WTC11 (cell line): ENCODE measurements at regions of chr9 and their contacts with region 1.

Region 1: DNA sequence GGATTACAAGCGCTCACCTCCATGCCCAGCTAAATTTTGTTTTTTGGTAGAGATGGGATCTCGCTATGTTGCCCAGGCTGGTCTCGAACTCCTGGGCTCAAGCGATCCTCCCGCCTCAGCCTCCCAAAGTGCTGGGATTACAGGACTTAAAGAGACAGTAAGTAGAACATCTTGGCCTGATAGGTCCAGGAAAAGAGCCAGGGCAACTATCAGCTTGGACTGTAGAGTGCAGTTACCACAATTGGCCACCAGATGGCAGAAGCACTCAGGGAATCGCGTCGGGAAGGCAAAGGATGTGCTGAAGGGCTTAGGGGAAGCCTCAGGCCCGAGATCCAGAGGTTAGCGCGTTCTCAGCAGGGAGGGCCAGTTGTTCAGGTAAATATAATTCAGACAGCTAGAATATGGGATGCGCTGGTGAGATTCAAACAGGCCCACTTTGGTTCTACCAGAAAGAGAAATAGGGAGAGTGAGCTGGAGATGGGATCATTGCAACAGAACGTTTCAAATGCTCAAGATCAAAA is 21.5 kb downstream of the C9orf57 start:
- DNase-seq: peak; percentile 86
- ATAC-seq: peak; percentile 96
- H3K4me3 Mint-ChIP-seq: no peak overlapping the region
- H3K27ac Mint-ChIP-seq: no peak overlapping the region
- H3K4me1 Mint-ChIP-seq: peaks cover 3% of the 10 kb centered on the region; the same call in 1 of the 2 replicates
- H3K27me3 Mint-ChIP-seq: no peaks in the 10 kb centered on the region
- CTCF ChIP-seq: peak; percentile 99

Region 2: DNA sequence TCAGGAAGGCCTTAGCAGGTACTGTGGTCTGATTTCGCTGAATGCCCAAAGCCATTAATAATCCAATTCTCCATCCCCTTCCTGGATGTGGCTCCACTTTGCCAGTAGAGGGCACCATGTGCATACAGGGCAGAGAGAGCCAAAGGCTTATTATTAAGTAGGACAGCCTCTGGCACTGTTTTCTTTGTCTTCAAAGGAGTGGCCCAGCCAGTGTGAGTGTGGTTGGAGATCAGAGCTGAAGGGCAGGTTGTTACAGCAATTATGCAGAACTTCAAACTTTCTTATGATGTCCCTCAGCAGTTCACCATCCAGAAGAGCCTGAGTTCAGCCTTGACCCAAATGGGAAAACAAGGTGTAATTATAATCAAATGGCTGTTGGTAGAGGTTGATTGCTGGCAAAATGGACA is 232.0 kb before region 1 on chr9:
- CTCF ChIA-PET with region 1: interaction called, 22 read pairs
- POLR2A ChIA-PET with region 1: no interaction called
- DNase-seq: peak; percentile 57
- ATAC-seq: peak; percentile 100
- H3K4me3 Mint-ChIP-seq: no peak overlapping the region
- H3K27ac Mint-ChIP-seq: peak overlapping the region; percentile 58
- H3K4me1 Mint-ChIP-seq: peaks cover 17% of the 10 kb centered on the region
- H3K27me3 Mint-ChIP-seq: no peaks in the 10 kb centered on the region
- CTCF ChIP-seq: 0 out of 2 replicates have a peak, but pooled peaks have one; percentile 43

Region 3: DNA sequence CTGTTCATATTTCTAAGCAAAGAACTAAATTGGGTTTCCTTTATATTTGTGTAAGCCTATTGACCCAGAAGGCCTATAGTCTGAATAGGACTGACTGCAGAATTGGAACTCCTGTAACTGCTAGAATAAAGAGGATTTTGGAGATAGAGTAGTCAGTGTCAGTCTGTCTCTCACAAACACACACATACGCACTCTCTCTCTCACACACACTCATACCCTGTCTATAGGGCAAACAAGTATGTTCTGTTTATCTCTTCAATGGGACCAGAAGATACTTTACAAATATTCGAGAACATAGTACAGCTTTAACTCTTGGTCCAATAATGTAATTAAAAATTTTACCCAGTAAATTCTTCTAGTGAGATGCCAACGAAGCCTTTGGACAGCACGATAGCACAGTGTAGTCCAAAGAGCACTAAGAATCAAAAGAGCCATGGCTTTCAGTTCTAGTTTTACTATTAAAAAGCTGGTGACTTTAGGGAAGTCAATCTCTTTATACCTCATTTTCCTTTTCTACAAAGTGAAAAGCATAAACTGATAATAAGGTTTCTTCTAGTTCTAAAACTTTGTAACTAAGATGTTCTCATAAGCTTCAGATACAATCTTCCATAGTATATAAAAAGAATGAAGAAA is 147.3 kb before region 1 on chr9:
- CTCF ChIA-PET with region 1: no interaction called
- POLR2A ChIA-PET with region 1: no interaction called
- DNase-seq: no peak
- ATAC-seq: no peak
- H3K4me3 Mint-ChIP-seq: no peak overlapping the region
- H3K27ac Mint-ChIP-seq: peak overlapping the region; percentile 48
- H3K4me1 Mint-ChIP-seq: peaks cover 65% of the 10 kb centered on the region
- H3K27me3 Mint-ChIP-seq: no peaks in the 10 kb centered on the region
- CTCF ChIP-seq: no peak

Region 4: GRCh38 chr9:72193478-72193881 is 154.5 kb after region 1 on chr9:
- CTCF ChIA-PET with region 1: interaction called, 11 read pairs
- POLR2A ChIA-PET with region 1: no interaction called
- DNase-seq: peak; percentile 17
- ATAC-seq: peak; percentile 78
- H3K4me3 Mint-ChIP-seq: no peak overlapping the region
- H3K27ac Mint-ChIP-seq: no peak overlapping the region
- H3K4me1 Mint-ChIP-seq: peaks cover 3% of the 10 kb centered on the region
- H3K27me3 Mint-ChIP-seq: no peaks in the 10 kb centered on the region
- CTCF ChIP-seq: no peak

Region 5: GRCh38 chr9:72271613-72272478 is 232.9 kb after region 1 on chr9:
- CTCF ChIA-PET with region 1: interaction called, 57 read pairs
- POLR2A ChIA-PET with region 1: no interaction called
- DNase-seq: peak; percentile 43
- ATAC-seq: peak; percentile 57; the same call in 1 of the 2 replicates
- H3K4me3 Mint-ChIP-seq: no peak overlapping the region
- H3K27ac Mint-ChIP-seq: no peak overlapping the region
- H3K4me1 Mint-ChIP-seq: no peaks in the 10 kb centered on the region
- H3K27me3 Mint-ChIP-seq: no peaks in the 10 kb centered on the region
- CTCF ChIP-seq: peak; percentile 80

Region 6: GRCh38 chr9:72826996-72827949 is 788.3 kb after region 1 on chr9:
- CTCF ChIA-PET with region 1: interaction called, 11 read pairs
- POLR2A ChIA-PET with region 1: no interaction called
- DNase-seq: no peak
- ATAC-seq: no peak
- H3K4me3 Mint-ChIP-seq: no peak overlapping the region
- H3K27ac Mint-ChIP-seq: no peak overlapping the region
- H3K4me1 Mint-ChIP-seq: peaks cover 9% of the 10 kb centered on the region; the same call in 1 of the 2 replicates
- H3K27me3 Mint-ChIP-seq: no peaks in the 10 kb centered on the region
- CTCF ChIP-seq: no peak